Activated B cell treated with CpG ODN at 0.5 μM for 24 hours (primary cell): ENCODE measurements at regions of chr12 and their contacts with region 1.

Region 1: GRCh38 chr12:50111693-50112455 is at the start of gene COX14:
- DNase-seq: peak; percentile 98
- ATAC-seq: peak; percentile 78
- H3K4me3 Mint-ChIP-seq: peak within 1 kb of the TSS; percentile 97
- H3K27ac Mint-ChIP-seq: peak within 1 kb of the TSS; percentile 95
- H3K4me1 Mint-ChIP-seq: peaks cover 66% of the 10 kb centered on the region
- H3K27me3 Mint-ChIP-seq: no peaks in the 10 kb centered on the region
- CTCF ChIP-seq: no peak
- total RNA-seq, gene COX14: 40.8 and 42.4 TPM in 2 replicates

Region 2: DNA sequence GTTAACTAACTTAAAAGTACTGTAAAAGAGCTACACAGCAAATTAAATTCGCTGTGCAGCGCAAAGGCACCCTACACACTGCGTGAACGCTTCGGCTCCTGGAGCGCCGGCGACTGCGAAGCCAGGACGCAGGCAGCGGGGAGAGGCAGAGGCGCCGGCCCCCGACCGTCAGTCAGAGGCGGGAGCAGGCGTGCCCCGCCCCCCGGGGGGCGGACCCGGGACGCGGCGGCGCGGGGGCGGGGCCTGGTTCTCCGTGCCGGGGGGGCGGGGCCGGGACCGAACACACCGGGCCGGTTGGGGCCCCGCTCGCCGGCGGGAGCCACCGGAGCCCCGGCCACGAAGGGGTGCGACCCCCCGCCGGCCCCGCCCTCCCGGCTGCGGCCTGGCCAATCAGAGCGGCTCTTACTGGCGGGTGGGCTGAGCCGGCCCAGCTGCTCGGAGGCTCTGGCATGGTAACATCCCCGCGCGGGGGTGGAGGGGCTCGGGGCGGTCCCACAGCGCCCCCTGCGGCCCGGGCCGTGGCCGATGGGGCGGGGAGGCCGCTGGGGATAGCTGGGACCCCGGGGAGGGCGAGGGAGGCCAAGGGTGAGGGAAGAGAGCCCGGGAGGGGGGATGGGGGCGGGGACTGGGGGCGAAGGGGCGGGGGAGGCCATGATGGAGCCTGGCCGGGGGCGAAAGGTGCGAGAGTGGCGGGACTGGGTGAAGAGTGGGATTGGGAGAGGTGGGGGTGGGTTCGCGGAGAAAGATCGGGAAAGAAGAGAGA is 488.6 kb before region 1 on chr12 and contains the start of gene PRPF40B:
- CTCF ChIA-PET with region 1: no interaction called
- POLR2A ChIA-PET with region 1: interaction called, 3 read pairs
- intact Hi-C with region 1: loop called (anchors 2 kb)
- DNase-seq: peak; percentile 89
- ATAC-seq: peak; percentile 79
- H3K4me3 Mint-ChIP-seq: peak within 1 kb of the TSS; percentile 88
- H3K27ac Mint-ChIP-seq: peak within 1 kb of the TSS; percentile 86
- H3K4me1 Mint-ChIP-seq: peaks cover 25% of the 10 kb centered on the region
- H3K27me3 Mint-ChIP-seq: no peaks in the 10 kb centered on the region
- CTCF ChIP-seq: no peak
- total RNA-seq, gene PRPF40B: 16.4 and 23.4 TPM in 2 replicates

Region 3: GRCh38 chr12:50025187-50026059 is 86.5 kb before region 1 on chr12 and contains the start of gene RACGAP1:
- CTCF ChIA-PET with region 1: interaction called, 4 read pairs
- POLR2A ChIA-PET with region 1: interaction called, 4 read pairs
- intact Hi-C with region 1: loop called (anchors 1 kb)
- DNase-seq: peak; percentile 83
- ATAC-seq: peak; percentile 97
- H3K4me3 Mint-ChIP-seq: peak within 1 kb of the TSS; percentile 96
- H3K27ac Mint-ChIP-seq: peak within 1 kb of the TSS; percentile 79
- H3K4me1 Mint-ChIP-seq: peaks cover 16% of the 10 kb centered on the region
- H3K27me3 Mint-ChIP-seq: no peaks in the 10 kb centered on the region
- CTCF ChIP-seq: no peak
- total RNA-seq, gene RACGAP1: 12.2 and 12.6 TPM in 2 replicates

Region 4: DNA sequence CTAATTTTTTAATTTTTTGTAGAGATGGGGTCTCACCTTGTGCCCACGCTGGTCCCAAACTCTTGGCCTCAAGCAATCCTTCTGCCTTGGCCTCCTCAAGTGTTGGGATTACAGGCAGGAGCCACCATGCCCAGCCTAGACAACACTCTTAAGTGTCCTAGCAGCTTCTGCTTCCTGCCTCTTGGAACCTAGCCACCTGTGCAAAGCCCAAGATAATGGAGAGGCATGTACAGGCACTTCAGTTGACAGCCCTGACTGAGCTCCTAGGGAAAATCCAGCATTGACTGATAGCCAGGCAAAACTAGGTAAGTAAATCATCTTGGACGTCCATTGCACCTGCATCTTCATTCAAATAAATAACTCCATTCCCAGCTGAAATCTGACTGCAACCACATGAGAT is 15.7 kb after region 1 on chr12:
- CTCF ChIA-PET with region 1: interaction called, 14 read pairs
- POLR2A ChIA-PET with region 1: interaction called, 9 read pairs
- intact Hi-C with region 1: no loop called
- DNase-seq: no peak
- ATAC-seq: no peak
- H3K4me3 Mint-ChIP-seq: no peak overlapping the region
- H3K27ac Mint-ChIP-seq: no peak overlapping the region
- H3K4me1 Mint-ChIP-seq: peaks cover 32% of the 10 kb centered on the region
- H3K27me3 Mint-ChIP-seq: no peaks in the 10 kb centered on the region
- CTCF ChIP-seq: no peak

Region 5: DNA sequence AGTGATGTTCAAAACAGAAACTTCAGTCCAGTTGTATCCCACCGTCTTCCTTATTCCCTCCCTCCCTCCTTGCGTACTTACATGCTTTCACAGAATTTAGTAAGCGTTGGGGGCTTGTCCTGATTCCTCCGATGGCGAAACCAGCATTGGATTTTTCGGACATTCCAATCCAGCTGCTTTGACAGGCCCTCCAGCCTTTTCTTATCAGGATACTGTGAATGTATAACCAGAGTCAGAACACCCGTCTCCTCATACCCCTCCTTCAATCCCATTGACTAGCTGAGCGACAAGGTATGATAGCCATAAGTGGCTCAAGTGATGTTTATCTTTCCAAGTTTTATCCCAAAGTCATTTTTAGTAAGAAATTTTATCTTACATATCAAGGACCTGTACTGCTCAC is 31.1 kb after region 1 on chr12:
- CTCF ChIA-PET with region 1: no interaction called
- POLR2A ChIA-PET with region 1: interaction called, 16 read pairs
- intact Hi-C with region 1: no loop called
- DNase-seq: no peak
- ATAC-seq: no peak
- H3K4me3 Mint-ChIP-seq: no peak overlapping the region
- H3K27ac Mint-ChIP-seq: no peak overlapping the region
- H3K4me1 Mint-ChIP-seq: no peaks in the 10 kb centered on the region
- H3K27me3 Mint-ChIP-seq: no peaks in the 10 kb centered on the region
- CTCF ChIP-seq: no peak

Region 6: DNA sequence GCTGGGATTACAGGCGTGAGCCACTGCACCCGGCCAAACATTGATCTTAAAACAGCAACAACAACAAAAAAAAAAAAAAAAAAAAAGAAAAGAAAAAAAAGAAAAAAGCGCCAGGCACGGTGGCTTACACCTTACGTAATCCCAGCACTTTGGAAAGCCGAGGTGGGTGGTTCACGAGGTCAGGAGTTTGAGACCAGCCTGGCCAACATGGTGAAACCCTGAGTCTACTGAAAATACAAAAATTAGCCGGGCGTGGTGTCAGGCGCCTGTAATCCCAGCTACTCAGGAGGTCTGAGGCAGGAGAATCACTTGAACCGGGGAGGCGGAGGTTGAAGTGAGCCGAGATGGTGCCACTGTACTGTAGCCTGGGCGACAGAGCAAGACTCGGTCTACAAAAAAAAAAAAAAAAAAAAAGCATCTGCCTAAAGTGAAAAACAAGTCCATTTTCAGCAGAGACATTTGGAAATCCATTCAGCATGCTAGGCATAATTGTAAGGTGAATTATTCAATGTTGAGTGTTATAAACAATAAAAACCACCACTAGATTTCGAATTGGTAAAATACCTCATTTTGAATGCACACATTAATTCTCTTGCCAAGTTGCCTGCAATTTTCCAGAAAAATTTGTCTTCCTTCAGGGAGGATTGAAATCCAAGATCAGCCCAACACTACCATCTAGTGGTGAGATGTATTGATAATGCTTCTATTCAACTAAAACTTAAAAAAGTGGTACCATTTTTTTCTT is 63.3 kb after region 1 on chr12:
- CTCF ChIA-PET with region 1: interaction called, 17 read pairs
- POLR2A ChIA-PET with region 1: interaction called, 9 read pairs
- intact Hi-C with region 1: loop called (anchors 2 kb)
- DNase-seq: no peak
- ATAC-seq: no peak
- H3K4me3 Mint-ChIP-seq: no peak overlapping the region
- H3K27ac Mint-ChIP-seq: no peak overlapping the region
- H3K4me1 Mint-ChIP-seq: no peaks in the 10 kb centered on the region
- H3K27me3 Mint-ChIP-seq: no peaks in the 10 kb centered on the region
- CTCF ChIP-seq: peak; percentile 91

Region 7: DNA sequence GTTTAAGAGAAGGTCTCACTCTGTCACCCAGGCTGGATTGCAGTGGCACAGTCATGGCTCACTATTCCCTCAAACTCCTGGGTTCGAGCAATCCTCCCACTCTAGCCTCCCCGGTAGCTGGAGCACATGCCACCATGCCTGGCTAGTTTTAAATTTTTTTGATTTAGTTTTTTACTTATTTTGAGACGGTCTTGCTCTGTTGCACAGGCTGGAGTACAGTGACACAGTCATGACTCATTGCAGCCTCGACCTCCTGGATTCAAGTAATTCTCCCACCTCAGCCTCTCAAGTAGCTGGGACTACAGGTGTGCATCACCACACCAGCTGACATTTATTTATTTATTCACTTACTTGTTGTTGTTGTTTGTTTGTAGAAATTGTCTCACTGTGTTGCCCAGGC is 370.7 kb after region 1 on chr12:
- CTCF ChIA-PET with region 1: no interaction called
- POLR2A ChIA-PET with region 1: no interaction called
- intact Hi-C with region 1: no loop called
- DNase-seq: no peak
- ATAC-seq: no peak
- H3K4me3 Mint-ChIP-seq: no peak overlapping the region
- H3K27ac Mint-ChIP-seq: no peak overlapping the region
- H3K4me1 Mint-ChIP-seq: no peaks in the 10 kb centered on the region
- H3K27me3 Mint-ChIP-seq: no peaks in the 10 kb centered on the region
- CTCF ChIP-seq: no peak

Region 8: GRCh38 chr12:50763639-50764285 is 651.9 kb after region 1 on chr12 and contains the start of gene ATF1:
- CTCF ChIA-PET with region 1: interaction called, 3 read pairs
- POLR2A ChIA-PET with region 1: interaction called, 7 read pairs
- intact Hi-C with region 1: loop called (anchors 5 kb)
- DNase-seq: peak; percentile 89
- ATAC-seq: peak; percentile 80
- H3K4me3 Mint-ChIP-seq: peak within 1 kb of the TSS; percentile 95
- H3K27ac Mint-ChIP-seq: peak within 1 kb of the TSS; percentile 96
- H3K4me1 Mint-ChIP-seq: peaks cover 36% of the 10 kb centered on the region
- H3K27me3 Mint-ChIP-seq: no peaks in the 10 kb centered on the region
- CTCF ChIP-seq: no peak
- total RNA-seq, gene ATF1: 37.7 and 42.5 TPM in 2 replicates